ENCODE measurements at regions of chr21 and their contacts with region 1.

Region 1: GRCh38 chr21:27648560-27648959 is 681.7 kb upstream of the ADAMTS5 start:
- DNase-seq: peak; percentile 65
- ATAC-seq: peak; percentile 69
- H3K4me3 ChIP-seq: no peak overlapping the region
- H3K27ac ChIP-seq: peak overlapping the region; percentile 87
- H3K4me1 ChIP-seq: peaks cover 23% of the 10 kb centered on the region
- H3K27me3 ChIP-seq: no peaks in the 10 kb centered on the region
- CTCF ChIP-seq: no peak

Region 2: GRCh38 chr21:27581168-27581567 is 67.4 kb before region 1 on chr21:
- CTCF ChIA-PET with region 1: no interaction called
- POLR2A ChIA-PET with region 1: no interaction called
- intact Hi-C with region 1: loop called (anchors 2 kb)
- DNase-seq: peak; percentile 71
- ATAC-seq: peak; percentile 91
- H3K4me3 ChIP-seq: no peak overlapping the region
- H3K27ac ChIP-seq: no peak overlapping the region
- H3K4me1 ChIP-seq: peaks cover 3% of the 10 kb centered on the region; the same call in 1 of the 2 replicates
- H3K27me3 ChIP-seq: no peaks in the 10 kb centered on the region
- CTCF ChIP-seq: no peak

Region 3: DNA sequence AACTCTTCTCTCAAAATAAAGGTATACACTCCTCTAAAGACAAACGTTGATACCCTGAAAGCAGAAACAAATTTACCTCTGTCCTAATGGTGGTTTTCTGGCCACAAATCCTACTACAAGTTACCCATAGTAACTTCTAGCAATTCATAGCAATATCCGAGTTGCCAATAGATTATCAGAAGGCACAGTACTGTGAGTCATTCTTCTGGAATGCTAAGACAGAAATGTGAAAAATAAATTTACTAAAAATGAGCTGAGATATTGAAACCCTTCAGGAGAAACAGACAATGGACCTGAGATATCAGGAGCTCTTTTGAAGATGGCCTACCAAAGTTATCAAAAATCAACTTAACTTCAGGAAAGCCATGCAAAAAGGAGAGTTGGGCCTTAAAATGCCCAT is 33.3 kb after region 1 on chr21:
- CTCF ChIA-PET with region 1: no interaction called
- POLR2A ChIA-PET with region 1: no interaction called
- intact Hi-C with region 1: loop called (anchors 5 kb)
- DNase-seq: peak; percentile 24
- ATAC-seq: peak; percentile 22; the same call in 1 of the 2 replicates
- H3K4me3 ChIP-seq: no peak overlapping the region
- H3K27ac ChIP-seq: no peak overlapping the region
- H3K4me1 ChIP-seq: no peaks in the 10 kb centered on the region
- H3K27me3 ChIP-seq: no peaks in the 10 kb centered on the region
- CTCF ChIP-seq: no peak